ENCODE measurements at regions of chr10 and their contacts with region 1.

Region 1: DNA sequence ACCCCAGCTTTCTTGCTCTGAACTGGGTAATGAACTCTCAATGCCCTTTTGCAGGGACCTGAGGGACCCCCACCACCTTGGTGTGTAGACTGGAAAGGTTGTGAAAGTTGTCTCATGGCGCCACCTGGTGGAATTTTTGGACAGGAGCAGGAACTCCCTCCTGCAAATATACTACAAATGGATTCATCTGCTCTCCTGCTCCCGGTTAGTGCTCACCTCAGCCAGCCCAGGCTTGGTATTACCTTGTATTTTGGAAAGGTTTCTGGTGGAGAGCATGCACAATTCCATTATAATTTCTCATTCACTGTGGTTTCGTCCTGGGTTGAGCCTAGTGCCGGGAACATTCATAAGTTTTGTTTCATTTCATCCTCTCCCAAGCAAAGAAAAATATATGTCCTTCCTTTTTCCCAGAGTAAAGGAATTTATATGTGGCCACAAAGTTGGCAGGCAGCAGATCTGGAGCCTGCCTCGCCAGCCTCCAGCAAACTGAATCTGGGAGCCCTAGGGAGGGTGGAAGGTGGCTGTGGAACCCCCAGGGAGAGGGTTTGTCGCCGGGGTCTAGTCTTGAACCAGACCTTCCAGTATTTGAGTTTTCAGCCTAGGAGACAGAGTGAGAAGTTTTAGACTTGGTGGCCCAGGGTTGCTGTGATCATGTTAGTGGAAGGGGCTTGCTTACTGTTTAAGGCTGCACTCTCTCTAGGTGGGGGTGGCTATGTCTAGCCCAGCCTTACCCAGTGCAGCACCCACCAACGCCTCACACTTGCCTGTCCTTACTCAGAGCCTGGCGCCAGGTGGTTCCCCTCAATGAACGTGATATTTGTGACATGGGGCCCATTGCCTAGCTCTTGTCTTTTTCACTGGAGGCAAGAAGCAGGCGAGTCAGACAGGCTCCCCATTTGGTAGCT is 9.5 kb downstream of the FAM241B start:
- DNase-seq: peak; percentile 74 to 87 (median 80)
- H3K4me3 ChIP-seq: no peak overlapping the region
- H3K27ac ChIP-seq: no peak overlapping the region
- H3K4me1 ChIP-seq: no peaks in the 10 kb centered on the region
- H3K27me3 ChIP-seq: peaks cover 0 to 14% (median 6%) of the 10 kb centered on the region in 5 experiments

Region 2: DNA sequence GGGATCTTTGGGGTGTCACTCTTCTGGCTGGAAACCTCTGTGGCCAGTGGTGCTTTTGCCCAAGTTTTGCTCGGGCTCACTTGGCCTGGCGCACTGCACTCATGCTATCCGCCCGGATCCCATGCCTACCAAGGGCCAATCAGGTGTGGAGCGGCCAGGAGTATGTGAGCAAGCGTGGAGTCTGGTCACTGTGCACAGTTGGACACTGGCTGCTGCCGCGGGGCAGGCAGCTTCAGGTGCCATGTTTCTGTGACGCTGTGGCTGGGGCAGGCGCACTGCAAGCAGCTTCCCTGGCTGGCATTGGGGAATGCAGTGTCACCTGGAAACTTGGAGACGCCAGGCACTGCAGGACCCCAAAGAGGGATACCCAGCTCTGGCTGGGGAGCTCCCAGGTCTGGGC is 111.6 kb before region 1 on chr10:
- CTCF ChIA-PET with region 1: interaction called, 77 read pairs
- POLR2A ChIA-PET with region 1: no interaction called
- DNase-seq: no peak
- H3K4me3 ChIP-seq: no peak overlapping the region
- H3K27ac ChIP-seq: no peak overlapping the region
- H3K4me1 ChIP-seq: no peaks in the 10 kb centered on the region
- H3K27me3 ChIP-seq: peaks cover 0 to 3% (median 0%) of the 10 kb centered on the region in 5 experiments

Region 3: DNA sequence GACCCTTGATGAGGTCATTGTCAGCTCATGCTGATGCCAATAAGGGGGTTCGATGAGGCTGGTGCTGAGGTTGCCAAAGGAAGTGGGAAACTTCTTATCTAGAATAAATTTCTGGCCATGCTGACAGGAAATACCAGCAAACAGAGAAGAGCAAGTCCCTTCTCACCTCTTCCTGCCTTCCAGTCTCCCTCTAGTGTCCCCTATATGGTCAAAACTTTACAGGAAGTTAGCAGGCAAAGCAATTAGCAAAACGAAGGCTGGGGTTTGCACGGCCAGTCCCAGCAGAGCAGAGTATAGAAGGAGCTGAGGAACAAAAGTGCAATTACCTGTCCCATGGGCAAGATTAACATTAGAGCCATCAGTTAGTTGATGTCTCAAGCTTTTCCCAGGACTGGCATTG is 51.2 kb before region 1 on chr10:
- CTCF ChIA-PET with region 1: no interaction called
- POLR2A ChIA-PET with region 1: no interaction called
- DNase-seq: no peak
- H3K4me3 ChIP-seq: no peak overlapping the region
- H3K27ac ChIP-seq: no peak overlapping the region
- H3K4me1 ChIP-seq: peaks cover 0 to 3% (median 0%) of the 10 kb centered on the region in 4 experiments
- H3K27me3 ChIP-seq: peaks cover 0 to 22% (median 11%) of the 10 kb centered on the region in 5 experiments

Region 4: GRCh38 chr10:69649786-69650555 is 10.4 kb after region 1 on chr10:
- CTCF ChIA-PET with region 1: interaction called, 12 read pairs
- POLR2A ChIA-PET with region 1: no interaction called
- DNase-seq: no peak
- H3K4me3 ChIP-seq: no peak overlapping the region
- H3K27ac ChIP-seq: no peak overlapping the region
- H3K4me1 ChIP-seq: peaks cover 0 to 14% (median 6%) of the 10 kb centered on the region in 4 experiments
- H3K27me3 ChIP-seq: peaks cover 0 to 2% (median 0%) of the 10 kb centered on the region in 5 experiments

Measured in common myeloid progenitor, CD34-positive (primary cell).